ENCODE measurements at regions of chr3 and their contacts with region 1.

Region 1: GRCh38 chr3:113019182-113020137 is 28.7 kb downstream of the GTPBP8 start:
- DNase-seq: peak; percentile 65 to 85 (median 76)
- ATAC-seq: peak; percentile 84 to 87
- H3K4me3 Mint-ChIP-seq: peak overlapping the region; percentile 92 to 97 (median 94)
- H3K27ac Mint-ChIP-seq: peak overlapping the region; percentile 88 to 99 (median 96)
- H3K4me1 Mint-ChIP-seq: peaks cover 35 to 67% (median 60%) of the 10 kb centered on the region in 4 donors
- H3K27me3 Mint-ChIP-seq: no peaks in the 10 kb centered on the region

Region 2: DNA sequence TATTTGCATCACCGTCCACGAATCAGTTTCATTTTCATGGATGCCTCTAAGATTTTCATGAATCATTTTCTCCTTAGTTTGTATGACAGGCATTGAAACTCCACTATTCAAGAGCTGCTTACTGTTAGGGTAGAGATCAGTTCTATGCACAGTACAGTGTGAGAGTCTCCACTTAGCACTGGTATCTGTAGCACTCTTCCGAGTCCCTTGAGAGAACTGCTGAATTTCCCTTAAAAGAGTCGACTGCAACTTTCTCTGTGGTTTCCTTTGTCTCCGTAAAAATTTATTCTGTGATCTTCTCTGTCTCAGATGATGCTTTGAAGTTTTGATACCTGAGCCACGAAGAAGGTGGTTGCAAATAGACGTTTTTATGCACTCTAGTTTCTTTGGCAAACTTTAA is 13.8 kb before region 1 on chr3:
- POLR2A ChIA-PET with region 1: interaction called, 23 read pairs
- DNase-seq: peak in 5 of 10 donors; percentile 18 to 81 (median 61)
- ATAC-seq: peak; percentile 89 to 90
- H3K4me3 Mint-ChIP-seq: peak overlapping the region; percentile 57 to 87 (median 78)
- H3K27ac Mint-ChIP-seq: peak overlapping the region; percentile 89 to 98 (median 95)
- H3K4me1 Mint-ChIP-seq: peaks cover 34 to 84% (median 74%) of the 10 kb centered on the region in 4 donors
- H3K27me3 Mint-ChIP-seq: no peaks in the 10 kb centered on the region

Region 3: DNA sequence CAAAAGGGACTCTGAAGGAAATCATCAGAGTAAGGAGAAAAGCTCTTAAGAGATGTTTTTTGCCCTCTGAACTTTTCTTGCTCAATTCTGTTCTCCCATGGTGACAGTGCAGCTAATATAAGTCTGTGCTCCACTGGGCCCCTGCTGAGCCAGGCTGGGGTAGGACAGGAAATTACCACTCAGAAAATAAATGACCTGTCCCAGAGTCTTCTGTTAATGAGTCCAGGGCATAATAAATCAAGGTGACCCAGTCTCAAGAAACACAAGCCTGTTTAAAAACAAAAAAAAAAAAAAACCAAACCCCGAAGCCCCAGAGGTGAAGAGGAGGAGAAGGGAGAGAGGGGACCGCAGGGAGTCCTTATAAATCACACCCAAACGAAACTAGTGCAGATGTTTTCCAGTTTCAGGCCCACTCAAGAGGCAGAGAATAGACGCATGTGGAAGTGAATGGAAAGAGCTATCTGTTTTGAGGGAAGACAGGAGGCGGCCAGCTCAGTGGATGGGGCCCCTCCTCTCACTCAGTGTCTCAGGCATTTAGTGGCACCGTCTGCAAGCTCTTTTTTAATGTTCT is 132.1 kb after region 1 on chr3:
- POLR2A ChIA-PET with region 1: no interaction called
- DNase-seq: no peak
- ATAC-seq: no peak
- H3K4me3 Mint-ChIP-seq: no peak overlapping the region
- H3K27ac Mint-ChIP-seq: peak overlapping the region in 1 of 10 donors; percentile 36
- H3K4me1 Mint-ChIP-seq: no peaks in the 10 kb centered on the region
- H3K27me3 Mint-ChIP-seq: peaks cover 0 to 13% (median 0%) of the 10 kb centered on the region in 5 donors